Endothelial cell of umbilical vein (primary cell): ENCODE measurements at regions of chr10 and their contacts with region 1.

Region 1: GRCh38 chr10:26890956-26891355 is 30.2 kb upstream of the ABI1 start:
- DNase-seq: peak; percentile 66
- H3K4me3 ChIP-seq: no peak overlapping the region
- H3K27ac ChIP-seq: no peak overlapping the region
- H3K4me1 ChIP-seq: no peaks in the 10 kb centered on the region
- H3K27me3 ChIP-seq: peaks cover 0 to 2% of the 10 kb centered on the region in 2 experiments
- CTCF ChIP-seq: peak; percentile 54 to 68
- POLR2A ChIP-seq: no peak

Region 2: DNA sequence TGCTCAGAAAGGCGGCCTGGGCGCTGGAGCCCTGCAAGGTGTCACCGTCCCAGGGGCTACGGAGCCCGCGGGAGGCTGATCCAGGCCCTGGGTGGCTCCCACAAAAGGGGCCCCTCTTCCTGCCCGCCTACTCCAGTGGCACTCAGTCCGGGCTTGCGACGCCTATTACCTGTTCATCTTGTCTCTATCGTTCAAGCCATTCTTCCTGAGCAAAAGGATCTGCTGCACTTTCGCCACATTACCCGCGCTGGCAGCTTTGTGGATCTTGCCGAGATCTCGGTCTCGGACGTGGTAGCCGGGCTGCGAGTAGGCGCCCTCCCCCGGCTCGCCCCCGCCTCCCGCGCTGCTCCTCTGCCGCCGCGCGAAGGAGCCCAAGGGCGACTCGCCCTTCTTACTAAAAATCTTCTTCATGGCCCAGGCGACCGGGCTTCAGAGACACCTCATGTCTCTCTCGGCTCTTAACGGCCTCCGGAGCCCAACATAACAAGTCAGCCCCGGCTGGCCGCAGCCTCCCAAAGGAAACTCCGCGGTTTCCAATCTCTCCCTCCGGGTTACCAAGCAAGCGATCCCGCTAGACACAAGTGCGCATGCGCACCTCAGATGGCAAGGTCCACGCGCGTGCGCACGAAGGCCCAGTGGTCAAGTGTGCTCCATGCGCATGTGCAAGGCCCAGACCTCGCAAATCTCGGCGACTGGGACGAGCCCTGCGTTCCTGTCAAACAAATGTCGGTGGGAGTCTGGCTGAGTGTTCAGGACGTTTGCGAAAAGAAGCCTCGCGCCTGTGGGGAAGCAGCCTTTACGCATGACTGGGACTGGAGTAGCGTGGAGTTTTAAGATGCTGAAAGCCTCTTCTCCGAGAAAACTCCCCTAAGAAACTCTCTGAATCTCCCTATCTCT is 209.2 kb after region 1 on chr10 and contains the start of gene ANKRD26:
- CTCF ChIA-PET with region 1: no interaction called
- POLR2A ChIA-PET with region 1: no interaction called
- dilution Hi-C with region 1: no loop called
- intact Hi-C with region 1: loop called (anchors 5 kb)
- DNase-seq: peak; percentile 99
- H3K4me3 ChIP-seq: peak within 1 kb of the TSS; percentile 49 to 90 (median 84)
- H3K27ac ChIP-seq: peak within 1 kb of the TSS; percentile 66
- H3K4me1 ChIP-seq: peaks cover 8% of the 10 kb centered on the region
- H3K27me3 ChIP-seq: no peaks in the 10 kb centered on the region
- CTCF ChIP-seq: peak in 1 of 2 donors; percentile 22
- POLR2A ChIP-seq: peak; percentile 79
- total RNA-seq, gene ANKRD26: 7.2 and 9.5 TPM in 2 replicates

Region 3: DNA sequence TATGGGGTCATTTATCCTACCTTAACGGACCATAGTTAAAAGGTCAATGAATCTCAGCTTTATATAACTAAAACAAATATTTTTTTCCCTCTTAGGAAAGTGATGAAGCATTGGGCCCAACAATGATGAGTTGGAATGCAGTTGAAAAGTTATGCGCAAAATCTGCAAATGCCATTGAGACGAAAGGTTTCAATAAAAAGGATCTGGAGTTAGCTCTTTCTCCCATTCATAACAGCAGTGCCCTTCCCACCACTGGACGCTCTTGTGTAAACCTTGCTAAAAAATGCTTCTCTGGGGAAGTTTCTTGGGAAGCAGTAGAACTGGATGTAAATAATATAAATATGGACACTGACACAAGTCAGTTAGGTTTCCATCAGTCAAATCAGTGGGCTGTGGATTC is 278.9 kb after region 1 on chr10:
- CTCF ChIA-PET with region 1: no interaction called
- POLR2A ChIA-PET with region 1: no interaction called
- dilution Hi-C with region 1: no loop called
- intact Hi-C with region 1: no loop called
- DNase-seq: no peak
- H3K4me3 ChIP-seq: no peak overlapping the region
- H3K27ac ChIP-seq: no peak overlapping the region
- H3K4me1 ChIP-seq: no peaks in the 10 kb centered on the region
- H3K27me3 ChIP-seq: no peaks in the 10 kb centered on the region
- CTCF ChIP-seq: no peak
- POLR2A ChIP-seq: no peak

Region 4: DNA sequence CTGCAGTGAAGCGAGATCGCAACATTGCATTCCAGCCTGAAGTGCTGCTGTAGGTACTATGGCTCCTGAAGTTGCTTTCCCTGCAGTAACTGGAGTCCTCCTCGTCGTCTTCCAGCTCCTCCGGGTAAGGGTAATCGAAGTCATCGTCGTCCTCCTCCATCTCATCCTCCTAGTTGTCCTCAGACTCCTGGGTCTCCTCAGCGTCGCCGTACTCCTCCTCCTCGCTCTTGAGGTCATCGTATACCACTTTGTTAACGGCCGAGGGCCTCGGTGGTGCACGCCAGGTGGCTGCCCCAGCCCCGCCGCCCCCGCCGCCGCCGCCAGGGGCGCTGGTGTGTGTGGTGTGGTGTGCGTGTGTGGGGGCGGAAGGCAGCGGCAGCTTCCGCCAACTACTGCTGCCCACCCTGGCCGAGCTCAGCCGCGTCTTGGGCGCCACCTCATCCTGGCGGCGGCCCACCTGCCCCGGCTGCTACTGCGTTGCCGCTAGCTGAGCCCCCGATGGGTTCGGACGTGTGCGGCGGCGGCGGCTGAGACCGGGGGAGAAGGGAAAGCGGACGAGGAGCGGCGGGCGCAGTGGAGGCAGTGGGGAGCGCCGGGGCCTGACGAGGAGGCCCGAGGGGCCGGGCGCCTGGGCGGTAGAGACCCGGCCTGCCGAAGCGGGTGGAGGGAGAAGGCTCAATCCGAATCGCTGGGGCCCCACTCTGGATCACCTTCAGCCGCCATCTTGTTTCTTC is 361.5 kb after region 1 on chr10:
- CTCF ChIA-PET with region 1: no interaction called
- POLR2A ChIA-PET with region 1: no interaction called
- dilution Hi-C with region 1: no loop called
- intact Hi-C with region 1: no loop called
- DNase-seq: peak; percentile 65
- H3K4me3 ChIP-seq: peak overlapping the region in 2 of 3 experiments; percentile 50 to 66
- H3K27ac ChIP-seq: peak overlapping the region; percentile 40
- H3K4me1 ChIP-seq: no peaks in the 10 kb centered on the region
- H3K27me3 ChIP-seq: peaks cover 0 to 3% of the 10 kb centered on the region in 2 experiments
- CTCF ChIP-seq: peak; percentile 14 to 56
- POLR2A ChIP-seq: peak; percentile 59

Region 5: DNA sequence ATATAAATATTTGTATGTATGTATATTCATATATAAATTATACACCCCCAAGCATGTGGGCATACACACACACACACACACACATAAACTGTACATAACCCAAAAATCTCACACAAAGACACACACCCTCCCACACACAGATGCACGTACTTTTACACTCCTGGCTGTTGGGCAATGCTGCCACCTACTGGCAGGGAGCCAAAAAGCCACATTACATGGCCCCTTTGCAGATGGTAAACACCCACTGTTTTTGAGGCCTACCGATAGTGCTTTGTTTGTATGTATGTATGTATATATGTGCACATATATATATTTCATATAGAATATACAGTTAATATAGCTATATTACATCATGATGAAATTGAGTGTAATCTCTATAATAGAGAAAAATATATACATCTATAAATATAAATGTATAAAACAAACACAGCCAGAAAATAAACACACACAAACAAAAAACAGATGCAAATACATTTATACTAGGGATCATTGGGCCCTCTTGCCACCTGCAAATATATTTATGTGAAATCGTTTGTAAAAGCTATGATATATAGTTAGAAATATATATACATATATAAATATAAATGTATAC is 469.7 kb after region 1 on chr10:
- CTCF ChIA-PET with region 1: interaction called, 7 read pairs
- POLR2A ChIA-PET with region 1: no interaction called
- dilution Hi-C with region 1: no loop called
- intact Hi-C with region 1: loop called (anchors 1 kb)
- DNase-seq: peak; percentile 75
- H3K4me3 ChIP-seq: no peak overlapping the region
- H3K27ac ChIP-seq: no peak overlapping the region
- H3K4me1 ChIP-seq: no peaks in the 10 kb centered on the region
- H3K27me3 ChIP-seq: peaks cover 0 to 2% of the 10 kb centered on the region in 2 experiments
- CTCF ChIP-seq: peak; percentile 79 to 82
- POLR2A ChIP-seq: no peak